Head of caudate nucleus (tissue), 42 donors: ENCODE measurements at regions of chr1 and their contacts with region 1.

Region 1: GRCh38 chr1:226547754-226548191 is 791 bp upstream of the STUM start:
- DNase-seq: peak; percentile 70 to 94 (median 85)

Region 2: DNA sequence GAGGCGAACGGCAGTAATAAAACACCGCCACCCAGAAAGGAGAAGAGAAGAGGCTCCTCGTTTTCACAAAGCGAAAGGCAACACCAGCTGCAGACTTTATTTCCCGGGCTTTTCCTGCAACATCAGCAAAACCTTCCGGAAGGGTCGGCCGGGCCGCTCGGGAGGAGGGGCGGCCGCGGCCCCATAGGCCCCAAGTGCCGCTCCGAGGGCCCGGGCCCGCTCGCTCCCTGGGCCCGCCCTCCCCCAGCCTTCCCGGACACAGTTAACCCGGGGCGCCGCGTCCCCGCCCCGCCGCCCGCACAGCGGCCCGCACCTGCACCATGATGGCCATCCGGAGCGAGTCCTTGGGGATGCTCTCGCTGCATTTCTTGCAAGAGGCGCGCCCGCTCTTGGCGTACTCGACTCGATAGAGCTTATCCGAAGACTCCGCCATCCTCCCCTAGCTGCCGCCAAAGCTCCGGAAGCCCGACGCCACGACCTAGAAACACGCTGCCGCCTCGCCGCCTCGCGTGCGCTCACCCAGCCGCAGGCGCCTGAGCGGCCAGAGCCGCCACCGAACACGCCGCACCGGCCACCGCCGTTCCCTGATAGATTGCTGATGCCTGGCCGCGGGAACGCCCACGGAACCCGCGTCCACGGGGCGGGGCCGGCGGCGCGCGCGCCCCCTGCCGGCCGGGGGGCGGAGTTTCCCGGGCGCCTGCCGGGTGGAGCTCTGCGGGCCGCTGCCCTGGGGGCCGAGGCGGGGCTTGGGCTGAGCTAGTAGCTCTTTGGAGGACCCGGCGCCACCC is 140.1 kb before region 1 on chr1 and contains the start of gene PARP1:
- intact Hi-C with region 1: no loop called
- DNase-seq: peak; percentile 47 to 92 (median 85)

Region 3: DNA sequence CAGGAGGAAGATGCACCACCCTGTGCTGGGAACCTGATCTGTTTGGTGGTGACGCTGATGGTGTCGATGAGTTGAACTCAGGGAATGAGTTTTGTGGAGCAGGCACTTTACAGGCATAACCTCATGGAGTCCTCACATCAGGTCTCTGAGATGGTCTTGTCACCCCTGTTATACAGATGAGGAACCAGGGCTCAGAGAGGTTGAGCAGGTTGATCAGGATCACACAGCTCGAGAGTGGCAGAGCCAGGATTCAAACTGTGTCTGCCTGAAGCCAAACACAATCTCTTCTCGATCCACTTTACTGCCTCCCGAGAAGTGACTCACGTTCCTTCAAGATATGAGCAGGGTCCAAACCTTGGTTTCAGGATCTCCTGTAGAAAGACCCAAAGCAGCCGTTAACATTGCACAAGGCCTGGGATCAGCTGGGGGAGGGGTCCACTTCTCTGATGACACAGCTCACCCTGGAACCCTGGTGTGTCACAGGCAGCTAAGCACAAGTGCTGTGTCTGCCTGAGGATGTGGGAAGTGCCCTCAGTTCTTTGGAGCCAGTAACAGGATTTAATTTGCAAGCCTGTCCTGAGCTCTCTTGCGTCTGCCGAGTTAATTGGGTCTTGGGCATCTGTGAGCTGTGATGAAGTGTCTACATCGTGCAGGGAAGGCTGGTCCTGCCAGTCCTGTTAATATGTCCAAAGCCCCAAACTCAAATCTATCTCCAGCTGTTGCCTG is 64.6 kb before region 1 on chr1:
- intact Hi-C with region 1: no loop called
- DNase-seq: peak in 2 of 42 donors; percentile 25 to 32

Region 4: GRCh38 chr1:226608699-226609505 is 61.1 kb after region 1 on chr1:
- intact Hi-C with region 1: loop called (anchors 5 kb)
- DNase-seq: peak; percentile 64 to 88 (median 80)